Thyroid gland (tissue), 4 donors: ENCODE measurements at regions of chr17 and their contacts with region 1.

Region 1: DNA sequence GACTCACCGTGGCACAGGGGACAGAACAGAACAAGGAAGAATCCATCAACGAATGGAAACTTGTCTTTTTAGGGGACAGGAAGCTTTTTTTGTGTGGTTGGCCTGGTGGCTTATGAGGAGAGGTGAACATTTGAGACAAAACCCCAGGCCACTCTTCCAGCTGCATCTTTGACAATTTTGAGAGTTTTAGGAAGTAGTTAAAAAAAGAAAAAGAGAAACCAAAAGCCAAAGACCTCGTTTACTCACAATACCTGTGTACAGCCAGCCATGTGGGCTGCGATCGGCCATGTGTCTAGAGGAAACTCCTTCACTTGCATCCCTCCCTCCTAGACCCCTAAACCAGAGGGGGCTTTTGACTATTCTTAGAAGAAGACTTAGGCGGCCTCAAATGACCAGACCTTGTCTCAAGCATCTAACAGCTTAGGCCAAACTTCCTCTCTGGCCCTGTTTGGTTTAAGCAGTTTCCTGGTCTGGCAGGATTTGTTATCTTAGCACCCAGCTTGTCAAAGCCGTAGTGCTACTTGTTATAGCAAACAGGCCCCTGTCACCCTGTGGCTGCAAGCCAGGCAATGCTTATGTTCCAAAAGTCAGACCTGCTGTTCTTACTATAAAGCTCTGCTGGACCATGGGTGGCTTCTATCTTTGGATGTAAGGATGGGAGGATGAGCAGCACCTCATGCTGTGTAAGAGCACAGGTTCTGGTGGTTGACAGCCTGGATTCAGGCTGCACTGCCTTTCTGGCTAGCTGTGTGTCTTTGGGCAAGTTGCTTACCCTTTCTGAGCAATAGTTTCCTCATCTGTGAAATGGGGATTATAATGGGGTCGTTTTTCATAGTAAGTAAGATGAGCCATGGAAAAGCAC is 17.7 kb downstream of the KSR1 start:
- DNase-seq: peak; percentile 94 to 96
- H3K4me3 ChIP-seq: no peak overlapping the region
- H3K27ac ChIP-seq: peak overlapping the region; percentile 41 to 67 (median 62)
- H3K4me1 ChIP-seq: peaks cover 60 to 80% of the 10 kb centered on the region in 2 donors
- H3K27me3 ChIP-seq: no peaks in the 10 kb centered on the region
- CTCF ChIP-seq: no peak
- POLR2A ChIP-seq: peak in 1 of 2 donors; percentile 22

Region 2: GRCh38 chr17:27526604-27527230 is 52.7 kb after region 1 on chr17:
- intact Hi-C with region 1: loop called (anchors 10 kb)
- DNase-seq: peak; percentile 79 to 83
- H3K4me3 ChIP-seq: no peak overlapping the region
- H3K27ac ChIP-seq: peak overlapping the region; percentile 6 to 64 (median 7)
- H3K4me1 ChIP-seq: peaks cover 22 to 59% of the 10 kb centered on the region in 2 donors
- H3K27me3 ChIP-seq: no peaks in the 10 kb centered on the region
- CTCF ChIP-seq: no peak
- POLR2A ChIP-seq: no peak